Prostate gland (tissue), 2 donors: ENCODE measurements at regions of chr1 and their contacts with region 1.

Region 1: GRCh38 chr1:183915625-183916510 is 110.9 kb downstream of the RGL1 start:
- DNase-seq: peak; percentile 70
- H3K4me3 ChIP-seq: no peak overlapping the region
- H3K27ac ChIP-seq: peak overlapping the region; percentile 25 to 44
- H3K4me1 ChIP-seq: peaks cover 4% of the 10 kb centered on the region
- H3K27me3 ChIP-seq: no peaks in the 10 kb centered on the region
- CTCF ChIP-seq: peak; percentile 69 to 96 (median 90)
- POLR2A ChIP-seq: no peak

Region 2: GRCh38 chr1:183655562-183656075 is 260.2 kb before region 1 on chr1:
- intact Hi-C with region 1: loop called (anchors 1 kb)
- DNase-seq: peak; percentile 80
- H3K4me3 ChIP-seq: no peak overlapping the region
- H3K27ac ChIP-seq: no peak overlapping the region
- H3K4me1 ChIP-seq: no peaks in the 10 kb centered on the region
- H3K27me3 ChIP-seq: no peaks in the 10 kb centered on the region
- CTCF ChIP-seq: peak; percentile 72 to 98 (median 87)
- POLR2A ChIP-seq: no peak

Region 3: DNA sequence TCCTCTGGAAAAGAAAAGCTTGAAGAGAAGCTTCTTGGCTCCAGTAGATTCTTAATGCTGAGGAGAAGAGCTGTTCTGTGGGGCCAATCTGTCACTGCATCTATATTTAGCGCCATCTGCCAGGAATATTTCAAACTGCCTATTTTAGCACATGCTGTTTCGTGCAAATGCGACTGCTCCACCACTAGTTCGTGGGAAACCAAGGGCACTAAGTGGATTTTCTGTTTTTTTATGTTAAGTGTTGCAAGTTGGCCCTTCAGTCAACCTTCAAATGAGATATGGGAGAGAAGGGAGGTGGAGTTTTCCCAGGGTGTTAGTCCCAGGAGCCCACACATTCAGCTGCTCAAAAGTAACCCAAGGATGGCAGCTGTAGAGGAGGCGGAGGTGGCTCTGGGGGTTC is 227.6 kb after region 1 on chr1:
- intact Hi-C with region 1: no loop called
- DNase-seq: no peak
- H3K4me3 ChIP-seq: no peak overlapping the region
- H3K27ac ChIP-seq: no peak overlapping the region
- H3K4me1 ChIP-seq: no peaks in the 10 kb centered on the region
- H3K27me3 ChIP-seq: no peaks in the 10 kb centered on the region
- CTCF ChIP-seq: peak in 1 of 4 experiments; percentile 3
- POLR2A ChIP-seq: no peak